Posterior vena cava (tissue), 2 donors: ENCODE measurements at regions of chr21 and their contacts with region 1.

Region 1: GRCh38 chr21:16186742-16187141 is 457.0 kb downstream of the USP25 start:
- DNase-seq: no peak

Region 2: GRCh38 chr21:16071092-16071491 is 115.7 kb before region 1 on chr21:
- intact Hi-C with region 1: loop called in 1 of 2 experiments (anchors 10 kb)
- DNase-seq: peak; percentile 75

Region 3: DNA sequence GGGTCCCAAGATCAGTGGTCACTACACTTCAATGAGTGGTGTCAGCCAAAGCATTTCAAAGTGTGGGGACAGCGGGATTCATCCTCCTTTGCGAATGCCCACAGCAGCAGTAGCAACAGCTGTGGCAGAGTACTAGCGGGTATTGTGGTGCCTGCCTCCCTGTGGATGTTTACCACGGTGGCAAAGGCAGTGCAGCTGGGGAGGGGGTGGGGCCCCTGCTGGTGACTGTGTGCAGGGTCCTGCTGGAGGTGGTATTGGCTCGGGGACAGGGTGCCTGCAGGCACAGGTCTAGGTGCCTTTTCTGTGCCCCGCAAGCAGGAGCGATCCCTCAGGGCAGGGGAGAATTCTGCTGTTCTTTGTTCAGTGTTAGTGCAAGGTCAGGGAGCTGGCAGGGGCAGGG is 41.3 kb before region 1 on chr21:
- intact Hi-C with region 1: no loop called
- DNase-seq: no peak

Region 4: DNA sequence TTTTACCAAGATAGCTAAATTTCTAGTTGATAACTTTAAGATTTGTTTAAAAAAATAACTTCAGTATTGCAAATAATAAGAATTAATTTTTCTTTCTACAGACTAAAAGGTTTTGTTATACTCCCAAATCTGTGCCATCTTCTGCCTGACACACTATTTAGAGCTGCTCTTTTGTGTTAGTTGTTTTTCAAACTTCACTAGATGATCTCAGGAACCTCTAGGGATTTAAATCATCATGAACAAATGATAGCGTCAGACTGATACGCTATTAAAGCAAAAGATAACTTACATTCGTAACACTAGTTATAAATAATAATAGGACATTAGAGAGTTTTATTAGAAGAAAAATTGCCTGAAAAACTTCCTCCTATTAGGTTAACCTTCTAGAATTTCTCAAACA is 1083.0 kb after region 1 on chr21:
- intact Hi-C with region 1: loop called in 1 of 2 experiments (anchors 10 kb)
- DNase-seq: no peak